Activated CD4-positive, alpha-beta memory T cell treated with anti-CD3 and anti-CD28 coated beads, Interleukin-2, amount 10 ng/mL, durations not matched to agents 7 days and 5 days (primary cell): ENCODE measurements at regions of chr18 and their contacts with region 1.

Region 1: GRCh38 chr18:59358712-59359575 is at the start of gene LMAN1:
- DNase-seq: peak; percentile 94
- H3K4me3 Mint-ChIP-seq: peak within 1 kb of the TSS; percentile 93
- H3K27ac Mint-ChIP-seq: peak within 1 kb of the TSS; percentile 91
- H3K4me1 Mint-ChIP-seq: peaks cover 35% of the 10 kb centered on the region
- H3K27me3 Mint-ChIP-seq: no peaks in the 10 kb centered on the region
- total RNA-seq, gene LMAN1: 102 to 104 TPM

Region 2: GRCh38 chr18:59139371-59140298 is 219.3 kb before region 1 on chr18 and contains the start of gene SEC11C:
- CTCF ChIA-PET with region 1: no interaction called
- POLR2A ChIA-PET with region 1: interaction called, 13 read pairs
- DNase-seq: peak; percentile 96
- H3K4me3 Mint-ChIP-seq: peak within 1 kb of the TSS; percentile 92
- H3K27ac Mint-ChIP-seq: peak within 1 kb of the TSS; percentile 84
- H3K4me1 Mint-ChIP-seq: peaks cover 40% of the 10 kb centered on the region
- H3K27me3 Mint-ChIP-seq: peaks cover 8% of the 10 kb centered on the region
- total RNA-seq, gene SEC11C: 119 to 129 TPM

Region 3: DNA sequence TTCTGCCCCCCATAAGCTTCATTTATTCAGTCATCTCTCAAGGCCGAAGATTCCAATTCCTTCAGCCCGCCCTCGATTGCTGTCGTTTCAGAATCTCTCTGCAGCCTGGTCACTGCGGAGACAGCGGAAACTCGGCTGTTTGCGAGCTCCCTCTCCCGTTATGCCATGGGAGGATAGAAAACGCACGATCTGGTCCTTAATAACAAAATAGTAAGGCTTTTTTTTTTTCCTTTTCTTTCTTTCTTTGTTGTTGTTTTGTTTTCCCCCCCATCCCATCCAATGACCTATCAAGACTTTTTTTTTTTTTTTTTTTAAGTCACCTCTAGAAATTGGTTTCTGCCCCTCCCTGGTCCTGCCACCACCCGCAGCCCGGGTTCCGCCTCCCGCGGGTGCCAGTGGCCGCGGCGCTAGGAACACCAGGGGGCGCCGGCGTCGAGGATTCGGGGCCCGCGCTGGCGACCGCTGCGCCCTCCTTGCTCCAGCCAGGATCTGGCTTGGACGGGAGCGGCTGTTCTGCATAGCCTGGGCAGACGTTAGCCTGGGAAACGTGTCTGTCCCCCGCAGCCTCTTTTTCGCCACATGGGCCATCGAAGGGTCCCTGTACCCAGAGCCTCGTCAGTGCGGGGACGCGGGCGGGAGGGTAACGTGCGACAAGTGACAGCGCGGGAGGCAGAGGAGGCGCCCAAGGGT is 50.6 kb before region 1 on chr18:
- CTCF ChIA-PET with region 1: interaction called, 12 read pairs
- POLR2A ChIA-PET with region 1: interaction called, 3 read pairs
- DNase-seq: peak; percentile 70
- H3K4me3 Mint-ChIP-seq: peak overlapping the region; percentile 53
- H3K27ac Mint-ChIP-seq: no peak overlapping the region
- H3K4me1 Mint-ChIP-seq: peaks cover 4% of the 10 kb centered on the region
- H3K27me3 Mint-ChIP-seq: peaks cover 54% of the 10 kb centered on the region